ENCODE measurements at regions of chr19 and their contacts with region 1.

Region 1: GRCh38 chr19:34232566-34233481 is 21.5 kb upstream of the GARRE1 start:
- DNase-seq: no peak
- H3K4me3 ChIP-seq: no peak overlapping the region
- H3K4me3 Mint-ChIP-seq: no peak overlapping the region
- H3K27ac Mint-ChIP-seq: no peak overlapping the region
- H3K4me1 ChIP-seq: no peaks in the 10 kb centered on the region
- H3K4me1 Mint-ChIP-seq: peaks cover 18% of the 10 kb centered on the region
- H3K27me3 ChIP-seq: no peaks in the 10 kb centered on the region
- H3K27me3 Mint-ChIP-seq: no peaks in the 10 kb centered on the region
- CTCF ChIP-seq: no peak

Region 2: DNA sequence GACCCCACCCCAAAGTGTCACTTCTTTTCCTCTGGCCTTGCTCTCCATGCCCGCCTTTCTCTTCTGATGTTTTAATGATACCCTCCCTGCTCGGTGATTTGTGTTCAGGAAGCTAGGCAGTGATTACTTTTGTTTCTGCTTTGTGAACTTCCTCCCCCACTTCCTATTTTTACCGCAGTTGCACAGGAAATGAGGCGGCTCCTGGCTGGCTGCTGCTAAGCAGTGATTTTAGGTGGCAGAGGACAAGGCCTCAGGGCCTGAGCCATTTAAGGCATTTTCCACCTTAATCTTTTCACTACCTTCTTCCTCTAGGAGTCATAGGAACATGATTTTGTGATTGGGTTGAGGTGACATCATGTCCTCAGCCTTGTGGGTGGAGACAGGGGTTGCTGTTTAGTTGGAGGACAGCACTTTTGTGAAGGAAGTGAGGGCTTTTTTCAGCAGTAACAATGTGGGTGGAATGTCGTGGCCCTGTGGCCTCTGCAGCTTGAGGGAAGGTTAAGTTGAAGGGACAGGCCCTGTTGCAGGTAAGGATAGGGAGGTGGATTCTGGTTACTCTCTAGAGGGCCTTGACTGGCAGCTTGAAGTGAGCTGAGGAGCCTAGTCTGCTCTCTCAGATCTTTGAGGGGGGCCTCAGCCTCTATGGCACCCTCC is 37.3 kb after region 1 on chr19:
- CTCF ChIA-PET with region 1: interaction called, 11 read pairs
- POLR2A ChIA-PET with region 1: no interaction called
- intact Hi-C with region 1: no loop called
- DNase-seq: peak in 1 of 2 experiments; percentile 27
- H3K4me3 ChIP-seq: no peak overlapping the region
- H3K4me3 Mint-ChIP-seq: no peak overlapping the region
- H3K27ac Mint-ChIP-seq: peak overlapping the region; percentile 53
- H3K4me1 ChIP-seq: peaks cover 23% of the 10 kb centered on the region
- H3K4me1 Mint-ChIP-seq: peaks cover 23% of the 10 kb centered on the region
- H3K27me3 ChIP-seq: no peaks in the 10 kb centered on the region
- H3K27me3 Mint-ChIP-seq: no peaks in the 10 kb centered on the region
- CTCF ChIP-seq: no peak

Region 3: GRCh38 chr19:34317311-34317927 is 84.6 kb after region 1 on chr19:
- CTCF ChIA-PET with region 1: interaction called, 11 read pairs
- POLR2A ChIA-PET with region 1: interaction called, 8 read pairs
- intact Hi-C with region 1: no loop called
- DNase-seq: no peak
- H3K4me3 ChIP-seq: no peak overlapping the region
- H3K4me3 Mint-ChIP-seq: no peak overlapping the region
- H3K27ac Mint-ChIP-seq: peak overlapping the region; percentile 27
- H3K4me1 ChIP-seq: peaks cover 13% of the 10 kb centered on the region; the same call in 1 of the 2 replicates
- H3K4me1 Mint-ChIP-seq: peaks cover 12% of the 10 kb centered on the region
- H3K27me3 ChIP-seq: no peaks in the 10 kb centered on the region
- H3K27me3 Mint-ChIP-seq: no peaks in the 10 kb centered on the region
- CTCF ChIP-seq: no peak